H1 (cell line): ENCODE measurements at regions of chr21 and their contacts with region 1.

Region 1: GRCh38 chr21:15520811-15521636 is 208.8 kb upstream of the USP25 start:
- DNase-seq: no peak
- H3K4me3 ChIP-seq: no peak overlapping the region
- H3K27ac ChIP-seq: no peak overlapping the region
- H3K4me1 ChIP-seq: no peaks in the 10 kb centered on the region
- H3K27me3 ChIP-seq: no peaks in the 10 kb centered on the region
- CTCF ChIP-seq: peak in 2 of 3 experiments; percentile 48 to 52; a peak in 3 of 4 replicates
- EP300 ChIP-seq: no peak
- POLR2A ChIP-seq: no peak
- RAD21 ChIP-seq: peak; percentile 32 to 55

Region 2: DNA sequence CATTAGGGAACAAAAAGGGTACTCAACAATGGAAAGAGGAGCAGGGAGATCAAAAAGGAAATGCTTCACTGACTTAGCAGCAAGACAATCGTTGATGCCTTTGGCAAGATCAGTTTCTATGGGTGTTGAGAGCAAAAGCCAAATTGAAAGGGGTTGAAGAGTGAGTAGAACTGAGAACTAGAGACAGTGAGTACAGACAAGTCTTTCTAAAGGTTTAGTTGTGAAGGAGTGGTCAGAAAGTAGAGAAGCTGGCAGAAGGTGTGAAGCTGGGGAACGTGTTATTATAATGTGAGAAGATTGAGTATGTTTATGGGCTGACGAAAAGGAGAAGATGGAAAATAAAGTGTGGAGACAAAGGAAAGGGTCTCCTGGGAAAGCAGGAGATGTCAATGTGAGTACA is 12.5 kb before region 1 on chr21:
- CTCF ChIA-PET with region 1: interaction called, 12 read pairs
- POLR2A ChIA-PET with region 1: no interaction called
- DNase-seq: no peak
- H3K4me3 ChIP-seq: no peak overlapping the region
- H3K27ac ChIP-seq: no peak overlapping the region
- H3K4me1 ChIP-seq: peaks cover 0 to 4% (median 0%) of the 10 kb centered on the region in 4 experiments; a peak in 1 of 7 replicates
- H3K27me3 ChIP-seq: peaks cover 0 to 1% (median 0%) of the 10 kb centered on the region in 4 experiments; a peak in 1 of 7 replicates
- CTCF ChIP-seq: no peak
- EP300 ChIP-seq: no peak
- POLR2A ChIP-seq: no peak
- RAD21 ChIP-seq: no peak

Region 3: GRCh38 chr21:15534450-15534886 is 13.4 kb after region 1 on chr21:
- CTCF ChIA-PET with region 1: interaction called, 18 read pairs
- POLR2A ChIA-PET with region 1: no interaction called
- DNase-seq: no peak
- H3K4me3 ChIP-seq: no peak overlapping the region
- H3K27ac ChIP-seq: no peak overlapping the region
- H3K4me1 ChIP-seq: no peaks in the 10 kb centered on the region
- H3K27me3 ChIP-seq: no peaks in the 10 kb centered on the region
- CTCF ChIP-seq: peak in 1 of 3 experiments; percentile 16; a peak in 1 of 4 replicates
- EP300 ChIP-seq: no peak
- POLR2A ChIP-seq: no peak
- RAD21 ChIP-seq: peak in 1 of 2 experiments; percentile 20; a peak in 1 of 4 replicates

Region 4: DNA sequence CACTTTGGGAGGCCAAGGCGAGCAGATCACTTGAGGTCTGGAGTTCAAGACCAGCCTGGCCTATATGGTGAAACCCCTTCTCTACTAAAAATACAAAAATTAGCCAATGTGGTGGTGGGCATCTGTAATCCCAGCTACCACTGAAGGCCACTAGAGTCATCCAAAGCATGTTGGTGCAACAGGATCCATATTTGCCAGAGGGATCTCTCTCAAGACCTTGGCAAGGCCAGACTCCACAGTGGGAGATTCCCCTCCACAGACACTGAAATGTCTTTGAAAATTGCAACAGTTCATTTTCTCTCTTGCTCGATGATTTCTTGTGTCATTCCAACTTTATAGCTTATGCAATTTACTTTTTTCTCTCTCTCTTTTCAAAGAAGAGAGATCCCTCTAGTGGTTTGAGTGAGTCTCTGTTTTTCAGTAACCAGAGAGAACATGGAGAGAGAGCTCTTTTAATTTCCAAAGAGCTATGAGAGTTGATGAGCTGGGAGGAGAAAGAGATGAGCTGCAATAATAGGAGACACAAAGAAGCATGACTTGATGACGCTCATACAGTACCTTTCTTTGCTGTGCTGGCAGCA is 32.0 kb after region 1 on chr21:
- CTCF ChIA-PET with region 1: interaction called, 13 read pairs
- POLR2A ChIA-PET with region 1: no interaction called
- DNase-seq: no peak
- H3K4me3 ChIP-seq: no peak overlapping the region
- H3K27ac ChIP-seq: no peak overlapping the region
- H3K4me1 ChIP-seq: no peaks in the 10 kb centered on the region
- H3K27me3 ChIP-seq: peaks cover 0 to 1% (median 0%) of the 10 kb centered on the region in 4 experiments; a peak in 1 of 7 replicates
- CTCF ChIP-seq: peak in 1 of 3 experiments; percentile 51; a peak in 2 of 4 replicates
- EP300 ChIP-seq: no peak
- POLR2A ChIP-seq: no peak
- RAD21 ChIP-seq: peak; percentile 46 to 56